ENCODE measurements at regions of chr3 and their contacts with region 1.

Region 1: GRCh38 chr3:8501371-8502131 is at the start of gene LMCD1:
- DNase-seq: peak; percentile 94 to 97
- ATAC-seq: peak; percentile 79
- H3K4me3 ChIP-seq: peak within 1 kb of the TSS; percentile 63 to 70 (median 65)
- H3K27ac ChIP-seq: peak within 1 kb of the TSS; percentile 89 to 97 (median 94)
- H3K4me1 ChIP-seq: peaks cover 48% of the 10 kb centered on the region in 2 donors
- H3K27me3 ChIP-seq: no peaks in the 10 kb centered on the region
- CTCF ChIP-seq: peak; percentile 24 to 58 (median 43)
- POLR2A ChIP-seq: peak; percentile 92 to 98
- total RNA-seq, gene LMCD1: 96.0 to 581 (median 167) TPM

Region 2: DNA sequence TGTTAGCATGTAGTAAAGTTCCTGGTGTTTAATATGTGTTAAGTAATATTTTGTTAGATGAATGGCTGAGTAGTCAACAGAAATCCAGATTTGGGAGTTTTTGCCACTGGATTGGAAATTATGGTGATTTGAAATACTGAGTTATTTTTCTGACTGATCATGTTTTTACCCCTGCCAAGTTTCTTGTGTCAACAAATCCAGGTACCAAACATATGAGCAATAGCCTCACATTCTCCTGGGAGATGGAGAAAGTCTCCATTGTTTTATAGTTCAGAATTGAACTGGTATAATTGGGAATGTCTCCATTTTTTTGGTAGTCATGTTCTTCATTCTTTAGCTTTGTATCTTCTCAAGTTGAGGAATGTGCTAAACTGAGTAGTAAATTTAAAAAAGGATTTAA is 767.1 kb before region 1 on chr3:
- in situ Hi-C with region 1: no loop called
- intact Hi-C with region 1: no loop called
- DNase-seq: no peak
- ATAC-seq: no peak
- H3K4me3 ChIP-seq: no peak overlapping the region
- H3K27ac ChIP-seq: no peak overlapping the region
- H3K4me1 ChIP-seq: no peaks in the 10 kb centered on the region
- H3K27me3 ChIP-seq: no peaks in the 10 kb centered on the region
- CTCF ChIP-seq: no peak
- POLR2A ChIP-seq: no peak

Region 3: DNA sequence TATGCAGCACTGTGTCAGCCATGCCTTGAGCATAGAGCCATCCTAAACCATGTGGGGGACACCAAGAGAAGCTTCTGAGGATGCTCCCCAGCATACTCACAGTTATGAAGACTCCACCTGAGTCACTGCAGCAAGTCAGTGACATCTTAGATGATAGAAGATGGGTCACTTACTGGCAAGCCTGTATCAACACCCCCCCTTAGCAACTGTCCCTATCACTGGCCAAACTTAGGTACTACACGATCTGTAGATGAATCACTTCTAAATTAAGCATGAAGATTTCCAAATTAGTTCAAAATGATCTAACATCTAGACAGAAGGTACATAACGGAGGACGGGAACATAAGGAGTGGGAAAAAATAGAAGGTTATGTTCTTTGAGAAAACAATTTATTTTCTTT is 13.1 kb before region 1 on chr3:
- in situ Hi-C with region 1: no loop called
- intact Hi-C with region 1: loop called (anchors 2 kb)
- DNase-seq: peak; percentile 73 to 80
- ATAC-seq: peak; percentile 82 to 92
- H3K4me3 ChIP-seq: no peak overlapping the region
- H3K27ac ChIP-seq: peak overlapping the region; percentile 82 to 96 (median 90)
- H3K4me1 ChIP-seq: peaks cover 48 to 58% of the 10 kb centered on the region in 2 donors
- H3K27me3 ChIP-seq: no peaks in the 10 kb centered on the region
- CTCF ChIP-seq: peak in 2 of 5 experiments; percentile 21
- POLR2A ChIP-seq: peak; percentile 23 to 50

Region 4: DNA sequence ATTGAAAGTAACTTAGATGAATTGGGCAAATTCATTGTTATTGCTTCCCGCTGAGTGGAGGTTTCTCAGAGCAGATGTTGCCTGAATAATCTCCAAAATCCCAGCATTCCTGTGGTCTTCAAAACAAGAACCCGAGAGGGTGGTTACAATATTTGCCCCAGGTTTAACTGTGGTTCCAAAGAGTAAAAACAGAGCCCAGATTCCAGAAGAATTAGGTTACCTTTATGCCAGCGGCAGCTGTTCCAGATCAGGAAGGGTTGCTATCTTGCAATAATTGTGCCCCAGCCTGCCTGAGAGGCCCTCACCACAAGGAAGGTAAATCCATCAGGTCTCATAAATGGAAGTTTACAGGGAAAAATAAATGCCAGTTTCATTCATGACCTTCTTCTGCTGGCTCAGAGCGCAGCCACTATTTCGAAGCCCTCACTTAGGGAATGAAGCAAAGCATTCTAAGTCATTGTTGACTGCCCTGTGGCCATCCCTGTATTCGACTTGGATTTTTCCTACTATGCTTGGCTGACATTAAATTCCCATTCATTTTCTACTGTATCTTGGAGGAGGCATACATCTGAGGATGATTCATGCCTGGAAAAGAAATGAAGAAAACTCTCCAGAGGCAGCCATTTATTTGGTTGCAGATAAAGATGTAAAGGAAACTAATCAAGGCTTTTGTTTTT is 88.5 kb after region 1 on chr3:
- in situ Hi-C with region 1: loop called in 2 of 4 experiments (anchors 10 kb)
- intact Hi-C with region 1: no loop called
- DNase-seq: no peak
- ATAC-seq: no peak
- H3K4me3 ChIP-seq: no peak overlapping the region
- H3K27ac ChIP-seq: peak overlapping the region; percentile 86 to 94 (median 88)
- H3K4me1 ChIP-seq: peaks cover 62 to 65% of the 10 kb centered on the region in 2 donors
- H3K27me3 ChIP-seq: no peaks in the 10 kb centered on the region
- CTCF ChIP-seq: no peak
- POLR2A ChIP-seq: no peak

Region 5: DNA sequence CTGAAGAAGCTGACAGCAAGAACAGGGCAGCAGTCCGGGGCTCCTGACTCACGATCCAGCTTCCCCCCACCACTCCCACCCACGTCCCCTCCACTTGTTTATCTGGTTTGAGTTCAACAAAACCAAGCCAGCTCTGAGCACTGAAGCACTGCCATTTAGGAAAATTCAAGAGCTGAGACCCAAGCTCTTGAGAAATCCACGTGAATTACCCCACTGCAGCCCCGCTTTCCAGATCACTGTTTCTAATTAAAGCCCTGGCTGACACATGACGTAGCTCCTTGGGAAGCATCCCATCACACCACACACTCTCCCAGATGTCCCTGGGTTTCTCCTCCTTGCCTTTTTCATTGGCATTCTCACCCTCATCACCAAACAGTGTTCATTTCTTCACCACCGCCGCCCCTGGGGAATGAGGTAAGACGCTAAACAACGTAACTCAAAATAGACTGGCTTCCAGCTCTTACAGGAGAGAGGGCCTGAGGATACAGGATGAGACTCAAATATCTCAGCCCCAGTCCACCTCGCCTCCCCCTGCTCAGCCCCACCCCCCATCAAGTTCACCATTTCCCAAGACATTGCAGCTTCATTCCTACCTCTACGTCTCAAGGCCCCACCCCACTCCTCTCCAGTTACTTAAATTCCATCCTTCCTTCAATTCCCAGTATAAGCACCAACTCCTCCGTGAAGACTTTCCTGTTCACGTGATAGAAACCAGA is 652.5 kb after region 1 on chr3:
- in situ Hi-C with region 1: no loop called
- intact Hi-C with region 1: loop called (anchors 5 kb)
- DNase-seq: peak; percentile 73 to 92
- ATAC-seq: peak; percentile 81 to 84
- H3K4me3 ChIP-seq: peak overlapping the region; percentile 12 to 42 (median 28)
- H3K27ac ChIP-seq: peak overlapping the region; percentile 81 to 87 (median 82)
- H3K4me1 ChIP-seq: peaks cover 21 to 29% of the 10 kb centered on the region in 2 donors
- H3K27me3 ChIP-seq: no peaks in the 10 kb centered on the region
- CTCF ChIP-seq: no peak
- POLR2A ChIP-seq: peak in 1 of 2 donors; percentile 8

Measured in gastrocnemius medialis (tissue), 4 donors.